Heart left ventricle (tissue), 16 donors: ENCODE measurements at regions of chrX and their contacts with region 1.

Region 1: GRCh38 chrX:43969504-43970501 is 3.4 kb downstream of the NDP start:
- DNase-seq: no peak
- ATAC-seq: no peak
- H3K4me3 ChIP-seq: no peak overlapping the region
- H3K27ac ChIP-seq: no peak overlapping the region
- H3K4me1 ChIP-seq: peaks cover 0 to 4% (median 0%) of the 10 kb centered on the region in 12 donors
- H3K27me3 ChIP-seq: peaks cover 0 to 94% (median 0%) of the 10 kb centered on the region in 9 donors
- CTCF ChIP-seq: no peak
- POLR2A ChIP-seq: no peak

Region 2: DNA sequence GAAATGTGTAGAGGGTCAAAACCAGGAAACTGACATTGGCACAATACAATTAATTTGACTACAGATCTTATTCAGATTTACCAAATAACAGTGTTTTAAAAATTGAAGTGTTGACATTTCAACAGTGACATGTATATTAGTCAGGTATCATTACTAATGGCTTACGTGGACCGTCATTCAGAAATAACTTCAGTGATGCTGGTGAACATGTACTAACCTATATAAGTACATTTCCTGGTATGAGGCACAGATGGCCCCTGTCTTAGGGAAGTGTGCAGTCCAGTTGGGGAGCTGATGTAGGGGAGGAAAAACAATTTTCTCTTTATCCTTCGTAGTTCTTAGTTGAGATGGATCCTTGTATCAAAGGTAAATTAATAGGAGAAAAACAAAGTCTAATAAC is 336.0 kb before region 1 on chrX:
- intact Hi-C with region 1: no loop called
- DNase-seq: no peak
- ATAC-seq: no peak
- H3K4me3 ChIP-seq: no peak overlapping the region
- H3K27ac ChIP-seq: no peak overlapping the region
- H3K4me1 ChIP-seq: no peaks in the 10 kb centered on the region
- H3K27me3 ChIP-seq: peaks cover 0 to 17% (median 0%) of the 10 kb centered on the region in 9 donors
- CTCF ChIP-seq: no peak
- POLR2A ChIP-seq: no peak

Region 3: DNA sequence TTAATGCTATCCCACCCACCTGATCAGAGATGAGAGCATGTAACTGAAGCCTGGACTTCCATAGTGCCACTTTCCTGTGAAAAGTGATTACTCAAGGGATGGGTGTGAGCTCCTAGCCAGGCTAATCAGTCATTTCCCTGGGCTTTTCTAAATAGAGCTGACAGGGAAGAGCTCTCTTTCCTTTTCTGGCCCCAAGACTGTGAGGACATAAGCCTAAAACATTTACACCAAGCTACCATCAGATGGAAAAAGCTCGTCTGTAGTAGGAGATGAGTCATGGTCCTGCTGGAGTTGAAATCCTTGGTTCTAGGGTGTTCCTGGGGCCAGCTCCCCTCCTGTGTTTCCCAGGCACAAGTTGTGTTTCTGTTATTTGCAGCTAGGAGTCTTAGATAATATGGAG is 55.8 kb after region 1 on chrX:
- intact Hi-C with region 1: loop called in 6 of 10 experiments (anchors 10 kb)
- DNase-seq: no peak
- ATAC-seq: no peak
- H3K4me3 ChIP-seq: no peak overlapping the region
- H3K27ac ChIP-seq: no peak overlapping the region
- H3K4me1 ChIP-seq: no peaks in the 10 kb centered on the region
- H3K27me3 ChIP-seq: peaks cover 0 to 30% (median 0%) of the 10 kb centered on the region in 9 donors
- CTCF ChIP-seq: no peak
- POLR2A ChIP-seq: no peak

Region 4: GRCh38 chrX:44244008-44244407 is 274.2 kb after region 1 on chrX:
- intact Hi-C with region 1: loop called in 1 of 10 experiments (anchors 5 kb)
- DNase-seq: no peak
- ATAC-seq: no peak
- H3K4me3 ChIP-seq: no peak overlapping the region
- H3K27ac ChIP-seq: no peak overlapping the region
- H3K4me1 ChIP-seq: no peaks in the 10 kb centered on the region
- H3K27me3 ChIP-seq: peaks cover 0 to 76% (median 0%) of the 10 kb centered on the region in 9 donors
- CTCF ChIP-seq: peak in 10 of 12 donors; percentile 13 to 55 (median 35)
- POLR2A ChIP-seq: no peak